ENCODE measurements at regions of chr21 and their contacts with region 1.

Region 1: GRCh38 chr21:27700974-27701614 is 734.2 kb upstream of the ADAMTS5 start:
- DNase-seq: peak; percentile 88
- ATAC-seq: peak; percentile 96
- H3K4me3 ChIP-seq: no peak overlapping the region
- H3K27ac ChIP-seq: no peak overlapping the region
- H3K4me1 ChIP-seq: no peaks in the 10 kb centered on the region
- H3K27me3 ChIP-seq: no peaks in the 10 kb centered on the region
- CTCF ChIP-seq: peak; percentile 98
- POLR2A ChIP-seq: peak; percentile 53; the same call in 1 of the 2 replicates
- RAD21 ChIP-seq: peak; percentile 99

Region 2: GRCh38 chr21:26850108-26850643 is 850.9 kb before region 1 on chr21:
- CTCF ChIA-PET with region 1: interaction called, 6 read pairs
- POLR2A ChIA-PET with region 1: interaction called, 3 read pairs
- dilution Hi-C with region 1: no loop called
- in situ Hi-C with region 1: loop called (anchors 5 kb)
- intact Hi-C with region 1: loop called (anchors 1 kb)
- DNase-seq: peak; percentile 59
- ATAC-seq: no peak
- H3K4me3 ChIP-seq: no peak overlapping the region
- H3K27ac ChIP-seq: peak overlapping the region; percentile 33; the same call in 1 of the 2 replicates
- H3K4me1 ChIP-seq: peaks cover 8% of the 10 kb centered on the region
- H3K27me3 ChIP-seq: no peaks in the 10 kb centered on the region
- CTCF ChIP-seq: peak; percentile 58
- POLR2A ChIP-seq: no peak; the same call in 1 of the 2 replicates
- RAD21 ChIP-seq: peak; percentile 72

Region 3: GRCh38 chr21:26967062-26967913 is 733.8 kb before region 1 on chr21 and contains the start of gene ADAMTS5:
- CTCF ChIA-PET with region 1: no interaction called
- POLR2A ChIA-PET with region 1: interaction called, 10 read pairs
- dilution Hi-C with region 1: no loop called
- in situ Hi-C with region 1: no loop called
- intact Hi-C with region 1: loop called (anchors 2 kb)
- DNase-seq: peak; percentile 69
- ATAC-seq: peak; percentile 61
- H3K4me3 ChIP-seq: peak within 1 kb of the TSS; percentile 65
- H3K27ac ChIP-seq: peak within 1 kb of the TSS; percentile 80
- H3K4me1 ChIP-seq: no peaks in the 10 kb centered on the region; the same call in 1 of the 2 replicates
- H3K27me3 ChIP-seq: no peaks in the 10 kb centered on the region
- CTCF ChIP-seq: 0 out of 2 replicates have a peak, but pooled peaks have one; percentile 4
- POLR2A ChIP-seq: peak; percentile 65
- RAD21 ChIP-seq: no peak; the same call in 1 of the 2 replicates
- total RNA-seq, gene ADAMTS5: 0.54 and 1.1 TPM in 2 replicates

Region 4: GRCh38 chr21:27476696-27477095 is 224.4 kb before region 1 on chr21:
- CTCF ChIA-PET with region 1: no interaction called
- POLR2A ChIA-PET with region 1: no interaction called
- dilution Hi-C with region 1: no loop called
- in situ Hi-C with region 1: no loop called
- intact Hi-C with region 1: loop called (anchors 2 kb)
- DNase-seq: peak; percentile 62
- ATAC-seq: peak; percentile 83
- H3K4me3 ChIP-seq: no peak overlapping the region
- H3K27ac ChIP-seq: no peak overlapping the region
- H3K4me1 ChIP-seq: peaks cover 6% of the 10 kb centered on the region
- H3K27me3 ChIP-seq: no peaks in the 10 kb centered on the region
- CTCF ChIP-seq: peak; percentile 61
- POLR2A ChIP-seq: no peak
- RAD21 ChIP-seq: peak; percentile 74

Region 5: GRCh38 chr21:27570306-27570868 is 130.7 kb before region 1 on chr21:
- CTCF ChIA-PET with region 1: interaction called, 9 read pairs
- POLR2A ChIA-PET with region 1: interaction called, 3 read pairs
- dilution Hi-C with region 1: no loop called
- in situ Hi-C with region 1: no loop called
- intact Hi-C with region 1: loop called (anchors 2 kb)
- DNase-seq: peak; percentile 94
- ATAC-seq: peak; percentile 77
- H3K4me3 ChIP-seq: no peak overlapping the region
- H3K27ac ChIP-seq: peak overlapping the region; percentile 99
- H3K4me1 ChIP-seq: peaks cover 15% of the 10 kb centered on the region
- H3K27me3 ChIP-seq: no peaks in the 10 kb centered on the region
- CTCF ChIP-seq: no peak
- POLR2A ChIP-seq: no peak
- RAD21 ChIP-seq: peak; percentile 18; the same call in 1 of the 2 replicates

Region 6: GRCh38 chr21:28943631-28944030 is 1242.5 kb after region 1 on chr21:
- CTCF ChIA-PET with region 1: no interaction called
- POLR2A ChIA-PET with region 1: no interaction called
- dilution Hi-C with region 1: no loop called
- in situ Hi-C with region 1: loop called (anchors 25 kb)
- intact Hi-C with region 1: no loop called
- DNase-seq: peak; percentile 28
- ATAC-seq: no peak; the same call in 1 of the 2 replicates
- H3K4me3 ChIP-seq: no peak overlapping the region
- H3K27ac ChIP-seq: no peak overlapping the region
- H3K4me1 ChIP-seq: no peaks in the 10 kb centered on the region
- H3K27me3 ChIP-seq: no peaks in the 10 kb centered on the region
- CTCF ChIP-seq: no peak
- POLR2A ChIP-seq: no peak
- RAD21 ChIP-seq: no peak